WTC11 (cell line): ENCODE measurements at regions of chr15 and their contacts with region 1.

Region 1: GRCh38 chr15:38563723-38564519 is 693 bp downstream of the RASGRP1 start:
- DNase-seq: peak; percentile 74
- ATAC-seq: peak; percentile 62
- H3K4me3 Mint-ChIP-seq: peak overlapping the region; percentile 66
- H3K27ac Mint-ChIP-seq: no peak overlapping the region
- H3K4me1 Mint-ChIP-seq: peaks cover 15% of the 10 kb centered on the region
- H3K27me3 Mint-ChIP-seq: peaks cover 37% of the 10 kb centered on the region
- CTCF ChIP-seq: peak; percentile 92

Region 2: DNA sequence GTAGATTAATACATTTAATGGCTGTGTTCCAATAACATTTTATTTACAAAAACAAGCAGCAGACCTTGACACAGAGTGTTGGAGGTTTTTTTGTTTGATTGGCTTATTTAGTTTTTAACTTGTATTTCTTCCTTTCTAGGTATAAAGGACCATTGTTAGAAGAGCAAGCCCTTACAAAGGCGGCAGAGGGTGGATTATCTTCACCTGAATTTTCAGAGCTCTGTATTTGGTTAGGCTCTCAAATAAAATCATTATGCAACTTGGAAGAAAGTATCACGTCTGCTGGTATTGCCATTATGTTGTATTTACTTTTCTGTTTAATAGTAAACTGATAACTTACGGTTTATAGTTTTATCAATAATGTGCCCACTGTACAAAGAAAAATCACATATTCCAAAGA is 100.0 kb before region 1 on chr15:
- CTCF ChIA-PET with region 1: interaction called, 10 read pairs
- POLR2A ChIA-PET with region 1: no interaction called
- DNase-seq: no peak
- ATAC-seq: no peak
- H3K4me3 Mint-ChIP-seq: no peak overlapping the region
- H3K27ac Mint-ChIP-seq: no peak overlapping the region
- H3K4me1 Mint-ChIP-seq: peaks cover 9% of the 10 kb centered on the region
- H3K27me3 Mint-ChIP-seq: no peaks in the 10 kb centered on the region
- CTCF ChIP-seq: no peak

Region 3: GRCh38 chr15:38521316-38521715 is 42.6 kb before region 1 on chr15:
- CTCF ChIA-PET with region 1: interaction called, 20 read pairs
- POLR2A ChIA-PET with region 1: no interaction called
- DNase-seq: no peak
- ATAC-seq: no peak
- H3K4me3 Mint-ChIP-seq: no peak overlapping the region
- H3K27ac Mint-ChIP-seq: no peak overlapping the region
- H3K4me1 Mint-ChIP-seq: peaks cover 24% of the 10 kb centered on the region
- H3K27me3 Mint-ChIP-seq: no peaks in the 10 kb centered on the region
- CTCF ChIP-seq: no peak

Region 4: DNA sequence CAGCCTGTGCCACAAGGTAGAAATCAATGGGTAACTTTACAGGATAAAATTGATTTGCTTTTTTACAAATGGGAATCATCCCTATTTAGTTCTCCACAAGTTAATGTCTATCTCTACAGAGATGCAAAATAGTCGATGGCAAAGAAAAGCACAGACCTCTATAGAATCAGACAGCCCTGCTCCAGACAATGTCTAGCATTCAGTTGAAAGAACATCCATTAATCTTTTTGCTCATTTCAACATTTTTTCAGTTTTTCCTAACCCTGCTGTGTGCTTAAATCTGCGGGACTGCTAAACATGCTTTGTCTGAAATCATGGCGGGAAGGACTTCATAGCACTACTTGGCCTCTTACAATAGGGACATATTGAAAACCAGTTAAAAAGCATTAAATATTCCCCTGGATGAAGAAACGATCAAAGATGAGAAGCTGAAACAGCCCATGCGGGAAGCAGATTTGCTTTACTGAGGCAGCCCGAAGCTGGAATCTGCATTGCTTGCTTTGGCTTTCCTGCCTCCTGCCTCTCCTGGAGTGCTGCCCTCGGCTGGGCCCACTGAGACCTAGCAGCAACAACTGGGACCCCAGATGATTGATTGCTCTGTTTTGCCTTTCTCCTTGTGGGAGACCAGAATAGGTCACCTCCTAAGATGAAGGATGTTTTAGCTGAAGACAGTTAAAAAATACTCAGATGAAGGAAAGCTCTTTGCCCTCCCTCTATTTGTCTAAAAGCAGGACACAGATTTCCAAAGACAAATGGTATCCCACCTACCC is 39.2 kb after region 1 on chr15:
- CTCF ChIA-PET with region 1: interaction called, 22 read pairs
- POLR2A ChIA-PET with region 1: no interaction called
- DNase-seq: peak; percentile 30
- ATAC-seq: peak; percentile 79
- H3K4me3 Mint-ChIP-seq: no peak overlapping the region
- H3K27ac Mint-ChIP-seq: no peak overlapping the region
- H3K4me1 Mint-ChIP-seq: peaks cover 6% of the 10 kb centered on the region; the same call in 1 of the 2 replicates
- H3K27me3 Mint-ChIP-seq: no peaks in the 10 kb centered on the region; the same call in 1 of the 2 replicates
- CTCF ChIP-seq: no peak

Region 5: GRCh38 chr15:38647683-38648082 is 83.8 kb after region 1 on chr15:
- CTCF ChIA-PET with region 1: interaction called, 45 read pairs
- POLR2A ChIA-PET with region 1: no interaction called
- DNase-seq: no peak
- ATAC-seq: peak; percentile 71
- H3K4me3 Mint-ChIP-seq: no peak overlapping the region
- H3K27ac Mint-ChIP-seq: no peak overlapping the region
- H3K4me1 Mint-ChIP-seq: peaks cover 14% of the 10 kb centered on the region
- H3K27me3 Mint-ChIP-seq: peaks cover under 1% of the 10 kb centered on the region; the same call in 1 of the 2 replicates
- CTCF ChIP-seq: no peak

Region 6: GRCh38 chr15:38690689-38691332 is 126.9 kb after region 1 on chr15:
- CTCF ChIA-PET with region 1: interaction called, 93 read pairs
- POLR2A ChIA-PET with region 1: interaction called, 3 read pairs
- DNase-seq: peak; percentile 76
- ATAC-seq: peak; percentile 85
- H3K4me3 Mint-ChIP-seq: no peak overlapping the region
- H3K27ac Mint-ChIP-seq: no peak overlapping the region
- H3K4me1 Mint-ChIP-seq: peaks cover 15% of the 10 kb centered on the region
- H3K27me3 Mint-ChIP-seq: no peaks in the 10 kb centered on the region
- CTCF ChIP-seq: peak; percentile 78